CD14-positive monocyte (primary cell): ENCODE measurements at regions of chr3 and their contacts with region 1.

Region 1: DNA sequence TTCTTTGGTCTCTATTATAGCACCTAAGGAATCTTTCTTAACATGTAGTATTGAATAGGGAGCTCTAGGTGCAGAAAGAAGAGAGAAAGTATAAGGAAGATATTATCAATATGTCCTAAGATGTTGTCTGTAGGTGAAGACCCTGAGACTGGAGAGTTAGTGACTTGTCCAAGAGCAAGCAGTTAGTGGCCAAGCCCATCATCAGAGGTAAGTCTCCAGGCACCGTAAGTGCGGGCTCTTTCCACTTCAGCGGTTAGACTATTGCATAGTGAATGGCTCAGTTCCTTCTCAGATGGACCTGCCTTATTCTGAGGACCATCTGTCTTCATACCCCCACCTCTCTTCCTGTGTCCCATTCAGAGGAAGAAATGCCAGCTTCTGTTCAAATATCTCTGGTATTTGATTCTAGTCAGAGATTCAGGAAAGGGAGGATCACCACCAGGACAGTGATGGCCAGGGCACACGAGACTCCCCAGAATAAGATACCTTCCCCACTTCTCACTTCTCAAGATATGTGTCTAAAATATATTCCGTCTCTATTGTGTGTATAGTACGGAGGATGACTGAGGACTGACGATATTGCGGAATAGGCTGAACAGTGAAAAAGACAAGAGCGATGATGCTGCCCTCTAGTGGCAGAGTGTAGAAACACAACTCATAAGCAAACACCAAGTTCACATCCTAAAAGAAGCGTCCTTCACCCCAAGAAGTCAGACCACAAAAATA is 19.1 kb upstream of the ADGRG7 start:
- DNase-seq: peak; percentile 65 to 82 (median 77)
- H3K4me3 ChIP-seq: no peak overlapping the region
- H3K4me3 Mint-ChIP-seq: peak overlapping the region in 1 of 2 donors; percentile 18
- H3K27ac ChIP-seq: no peak overlapping the region
- H3K27ac Mint-ChIP-seq: no peak overlapping the region
- H3K4me1 ChIP-seq: peaks cover 4 to 5% of the 10 kb centered on the region in 2 donors
- H3K4me1 Mint-ChIP-seq: peaks cover 4% of the 10 kb centered on the region
- H3K27me3 ChIP-seq: no peaks in the 10 kb centered on the region
- H3K27me3 Mint-ChIP-seq: peaks cover 0 to 4% (median 0%) of the 10 kb centered on the region in 3 donors
- CTCF ChIP-seq: peak; percentile 87

Region 2: GRCh38 chr3:100463002-100463401 is 127.3 kb before region 1 on chr3:
- intact Hi-C with region 1: loop called in 1 of 2 experiments (anchors 5 kb)
- DNase-seq: peak; percentile 29 to 52 (median 48)
- H3K4me3 ChIP-seq: no peak overlapping the region
- H3K4me3 Mint-ChIP-seq: no peak overlapping the region
- H3K27ac ChIP-seq: no peak overlapping the region
- H3K27ac Mint-ChIP-seq: no peak overlapping the region
- H3K4me1 ChIP-seq: peaks cover 14 to 17% of the 10 kb centered on the region in 2 donors
- H3K4me1 Mint-ChIP-seq: peaks cover 18% of the 10 kb centered on the region
- H3K27me3 ChIP-seq: no peaks in the 10 kb centered on the region
- H3K27me3 Mint-ChIP-seq: no peaks in the 10 kb centered on the region
- CTCF ChIP-seq: peak; percentile 78